Left cardiac atrium (tissue), 4 donors: ENCODE measurements at regions of chr9 and their contacts with region 1.

Region 1: GRCh38 chr9:34611829-34612630 is at the start of gene RPP25L:
- DNase-seq: peak; percentile 91
- ATAC-seq: peak; percentile 97 to 98
- total RNA-seq, gene RPP25L: 20.8 to 27.8 TPM

Region 2: GRCh38 chr9:34363619-34364351 is 248.2 kb before region 1 on chr9:
- intact Hi-C with region 1: no loop called
- DNase-seq: peak; percentile 56
- ATAC-seq: peak; percentile 74 to 83

Region 3: DNA sequence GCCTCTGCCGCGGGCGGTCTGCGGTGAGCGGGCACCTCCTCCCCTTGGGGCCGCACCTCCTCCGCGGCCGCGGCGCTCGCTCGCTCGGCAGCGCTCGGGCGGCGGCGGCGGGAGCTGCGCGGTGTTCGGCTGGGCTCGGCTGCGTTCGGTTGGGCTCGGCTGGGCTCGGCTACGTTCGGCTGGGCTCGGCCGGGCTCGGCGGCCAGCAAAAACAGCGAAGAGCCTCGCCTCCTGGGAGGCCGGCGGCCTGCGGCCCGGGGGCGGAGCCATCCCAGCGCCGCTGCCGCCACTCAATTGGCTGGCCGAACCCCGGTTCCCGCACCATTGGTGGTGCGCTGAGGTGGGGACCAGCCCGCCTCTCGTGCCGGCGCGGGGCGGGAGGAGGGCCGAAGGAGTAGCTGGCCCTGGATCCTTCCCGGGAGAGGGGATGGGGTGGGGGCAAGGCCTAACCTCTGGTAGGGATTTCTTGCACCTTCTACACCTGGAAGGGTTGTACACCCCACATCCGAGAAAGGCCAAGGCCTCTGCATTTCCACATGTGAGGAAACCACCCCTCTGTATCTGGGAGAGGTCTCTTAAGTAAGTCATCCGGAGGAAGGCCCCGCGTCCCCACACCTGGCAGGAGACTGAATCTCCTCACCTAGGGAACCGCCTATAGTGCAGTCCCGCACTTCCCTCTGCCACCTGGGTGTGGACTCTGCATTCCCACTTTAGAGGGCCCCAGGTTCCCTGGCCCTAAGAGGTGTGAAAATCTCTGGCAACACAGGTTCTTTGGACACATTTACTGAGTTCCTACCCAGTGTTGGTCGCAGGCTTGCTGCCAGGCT is 88.8 kb before region 1 on chr9 and contains the start of gene ENHO:
- intact Hi-C with region 1: no loop called
- DNase-seq: peak; percentile 90
- ATAC-seq: peak; percentile 98 to 99
- total RNA-seq, gene ENHO: 0.56 to 0.60 TPM

Region 4: DNA sequence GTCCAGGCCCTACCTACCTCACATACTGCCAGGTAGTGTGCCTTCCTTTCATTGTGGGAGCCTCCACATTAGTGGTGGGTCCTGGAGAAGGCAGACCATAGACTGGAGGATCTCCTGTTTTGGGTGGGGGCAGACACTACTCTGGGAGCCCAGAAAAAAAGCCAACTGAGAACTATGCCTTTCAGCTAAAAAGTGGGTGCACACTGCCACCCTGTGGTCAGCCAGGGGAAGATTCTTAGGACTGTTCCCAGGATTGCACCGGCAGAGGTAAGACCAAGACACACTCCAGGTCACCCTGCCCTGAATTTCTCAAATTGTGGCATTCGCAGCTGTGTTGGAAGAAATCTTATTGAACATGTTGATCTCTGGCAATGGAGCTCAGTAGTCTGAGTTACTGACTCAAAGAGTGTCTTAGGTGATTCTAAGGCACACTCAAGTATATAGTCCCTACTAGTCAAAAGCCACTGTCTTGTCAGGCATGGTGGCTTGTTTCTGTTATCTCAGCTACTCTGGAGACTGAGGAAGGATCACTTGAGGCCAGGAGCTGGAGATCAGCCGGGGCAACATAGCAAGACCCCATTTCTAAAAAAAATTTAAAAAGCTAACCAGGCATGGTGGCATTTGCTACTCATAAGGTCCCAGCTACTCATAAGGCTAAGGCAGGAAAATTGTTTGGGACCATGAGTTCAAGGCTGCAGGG is 22.0 kb after region 1 on chr9:
- intact Hi-C with region 1: loop called in 1 of 2 experiments (anchors 1 kb)
- DNase-seq: no peak
- ATAC-seq: peak; percentile 10 to 14

Region 5: DNA sequence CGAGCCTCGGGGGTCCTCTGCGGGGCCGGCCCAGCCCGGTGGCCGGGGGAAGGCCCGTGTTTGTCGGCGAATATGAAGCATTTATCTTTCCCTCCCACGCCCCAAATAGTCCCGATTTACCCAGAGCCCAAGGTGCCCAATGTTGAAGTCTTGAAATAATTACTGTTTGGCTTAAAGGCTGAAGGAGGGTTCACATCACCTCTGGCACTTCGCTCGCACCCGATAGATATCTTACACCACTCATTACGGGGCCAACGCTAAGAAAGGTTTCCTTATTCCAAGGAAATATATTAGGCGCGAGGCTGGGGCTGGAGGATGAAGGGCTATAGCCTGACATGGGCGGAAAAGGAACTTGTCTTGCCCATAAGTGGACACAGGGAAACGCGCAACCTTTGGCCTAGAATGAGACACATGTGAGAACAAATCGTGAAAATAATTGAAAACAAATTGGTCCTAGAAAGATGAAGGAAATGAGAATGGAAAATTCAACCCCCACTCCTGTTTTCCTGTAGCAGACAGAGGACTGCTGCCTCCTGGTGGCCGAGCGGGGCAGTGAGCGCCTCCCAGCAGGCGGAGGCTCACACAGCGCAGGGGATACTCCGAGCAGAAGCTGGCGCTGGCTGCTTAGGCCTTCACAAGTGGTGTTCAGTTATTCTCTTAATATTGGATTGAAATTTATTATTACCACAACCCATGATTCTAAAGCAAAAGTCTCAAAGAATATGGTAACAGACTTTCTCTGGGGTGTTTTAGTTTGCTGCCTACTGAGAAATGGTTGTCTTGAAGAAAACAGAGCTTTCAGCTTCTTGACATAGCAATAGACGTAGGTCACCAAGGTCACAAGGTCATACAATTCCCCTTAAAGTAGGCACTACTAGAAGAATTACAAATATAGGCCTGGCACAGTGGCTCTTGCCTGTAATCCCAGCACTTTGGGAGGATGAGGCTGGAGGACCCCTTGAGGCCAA is 90.0 kb after region 1 on chr9:
- intact Hi-C with region 1: loop called in 1 of 2 experiments (anchors 5 kb)
- DNase-seq: peak; percentile 85
- ATAC-seq: peak; percentile 93 to 96